HEK293 (cell line): ENCODE measurements at regions of chr16 and their contacts with region 1.

Region 1: GRCh38 chr16:50509521-50510341 is 38.5 kb upstream of the NKD1 start:
- H3K4me3 ChIP-seq: no peak overlapping the region
- H3K27ac ChIP-seq: no peak overlapping the region
- H3K4me1 ChIP-seq: no peaks in the 10 kb centered on the region
- CTCF ChIP-seq: no peak

Region 2: DNA sequence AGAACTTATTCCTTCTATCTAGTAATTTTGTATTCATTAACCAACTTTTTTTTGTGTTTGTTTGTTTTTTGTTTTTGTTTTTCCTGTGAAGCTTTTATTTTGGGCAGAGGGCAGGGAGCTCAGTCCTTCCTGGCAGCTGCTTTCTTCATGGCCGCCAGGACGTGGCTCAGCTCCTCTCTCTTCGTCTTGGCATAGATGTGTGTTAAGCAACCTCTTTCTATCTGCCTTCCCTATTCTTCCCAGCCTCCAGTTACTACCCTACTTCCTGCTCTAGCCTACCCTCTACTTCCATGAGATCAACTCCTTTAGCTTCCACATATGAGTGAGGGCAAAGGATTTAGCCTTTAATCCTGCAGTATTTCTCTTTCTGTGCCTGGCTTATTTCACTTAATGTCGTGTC is 132.7 kb before region 1 on chr16:
- CTCF ChIA-PET with region 1: interaction called, 10 read pairs
- POLR2A ChIA-PET with region 1: interaction called, 3 read pairs
- H3K4me3 ChIP-seq: no peak overlapping the region
- H3K27ac ChIP-seq: no peak overlapping the region
- H3K4me1 ChIP-seq: no peaks in the 10 kb centered on the region
- CTCF ChIP-seq: no peak

Region 3: GRCh38 chr16:50538411-50539052 is 28.8 kb after region 1 on chr16:
- CTCF ChIA-PET with region 1: no interaction called
- POLR2A ChIA-PET with region 1: no interaction called
- H3K4me3 ChIP-seq: no peak overlapping the region
- H3K27ac ChIP-seq: no peak overlapping the region
- H3K4me1 ChIP-seq: no peaks in the 10 kb centered on the region
- CTCF ChIP-seq: no peak

Region 4: DNA sequence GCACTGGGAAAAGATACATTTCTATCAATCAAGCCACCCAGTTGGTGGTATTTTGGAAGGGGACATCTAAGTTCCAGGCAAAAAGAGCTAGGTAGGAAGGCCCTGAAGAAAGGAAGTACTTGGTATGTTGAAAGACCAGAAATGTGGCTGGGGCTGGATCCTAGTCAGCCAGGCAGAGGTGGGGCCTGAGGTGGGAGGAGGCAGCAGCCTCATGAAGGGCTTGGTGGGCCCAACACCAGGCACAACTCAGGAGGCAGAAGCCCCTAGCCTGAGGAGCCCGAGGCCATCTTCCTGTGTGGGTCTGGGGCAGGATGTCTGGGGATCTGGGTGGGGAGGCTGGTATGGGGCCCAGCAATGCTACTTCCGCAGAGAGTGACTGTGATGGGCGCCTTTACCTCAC is 535.5 kb after region 1 on chr16:
- CTCF ChIA-PET with region 1: no interaction called
- POLR2A ChIA-PET with region 1: no interaction called
- H3K4me3 ChIP-seq: no peak overlapping the region
- H3K27ac ChIP-seq: no peak overlapping the region
- H3K4me1 ChIP-seq: no peaks in the 10 kb centered on the region
- CTCF ChIP-seq: no peak